ENCODE measurements at regions of chr2 and their contacts with region 1.

Region 1: GRCh38 chr2:3771576-3771975 is 68.2 kb downstream of the DCDC2C start:
- DNase-seq: no peak
- H3K4me3 ChIP-seq: no peak overlapping the region
- H3K27ac ChIP-seq: no peak overlapping the region
- H3K4me1 ChIP-seq: no peaks in the 10 kb centered on the region
- H3K27me3 ChIP-seq: no peaks in the 10 kb centered on the region
- CTCF ChIP-seq: no peak

Region 2: DNA sequence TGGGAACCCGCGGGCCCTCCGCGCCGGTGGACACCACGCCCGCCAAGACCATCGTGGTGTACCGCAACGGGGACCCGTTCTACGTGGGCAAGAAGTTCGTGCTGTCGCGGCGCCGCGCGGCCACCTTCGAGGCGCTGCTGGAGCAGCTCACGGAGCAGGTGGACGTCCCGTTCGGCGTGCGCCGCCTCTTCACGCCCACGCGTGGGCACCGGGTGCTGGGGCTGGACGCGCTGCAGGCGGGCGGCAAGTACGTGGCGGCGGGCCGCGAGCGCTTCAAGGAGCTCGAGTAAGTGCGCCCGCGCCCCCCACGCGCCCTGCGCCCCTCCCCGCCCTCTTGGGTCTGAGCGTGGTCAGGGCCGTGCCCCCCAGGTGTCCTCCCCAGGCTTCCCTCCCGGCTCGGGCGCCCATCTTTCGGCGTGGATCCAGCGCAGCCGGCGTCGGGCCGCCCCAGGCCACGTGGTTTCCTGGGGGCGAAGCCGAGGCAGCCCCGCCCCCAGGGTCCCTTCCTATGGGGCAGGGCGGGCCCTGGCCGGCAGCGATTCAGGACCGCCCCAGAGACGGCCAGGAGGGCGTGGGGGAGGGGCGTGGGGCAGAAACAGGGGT is 67.7 kb before region 1 on chr2:
- CTCF ChIA-PET with region 1: no interaction called
- dilution Hi-C with region 1: loop called (anchors 5 kb)
- in situ Hi-C with region 1: no loop called
- intact Hi-C with region 1: no loop called
- DNase-seq: no peak
- H3K4me3 ChIP-seq: no peak overlapping the region
- H3K27ac ChIP-seq: no peak overlapping the region
- H3K4me1 ChIP-seq: no peaks in the 10 kb centered on the region
- H3K27me3 ChIP-seq: peaks cover 2% of the 10 kb centered on the region
- CTCF ChIP-seq: no peak

Region 3: DNA sequence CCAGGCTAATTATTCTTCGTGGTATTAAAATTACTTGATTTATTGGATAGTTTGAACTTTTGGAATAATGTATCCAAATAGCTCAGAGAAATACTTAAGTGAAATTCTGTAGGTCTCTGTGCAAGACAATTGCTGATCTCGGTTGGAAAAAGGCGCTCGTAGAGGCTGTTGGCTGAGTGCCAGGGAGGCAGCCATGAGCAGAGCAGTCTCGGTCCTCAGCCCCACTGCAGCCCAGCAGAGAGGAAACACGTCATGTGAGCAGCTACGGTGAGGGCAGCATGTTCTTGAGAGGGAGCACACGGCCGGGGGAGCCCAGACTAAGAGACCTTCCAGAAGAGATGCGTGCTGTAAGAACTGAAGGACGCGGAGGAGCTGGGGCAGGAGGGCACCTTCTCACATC is 25.7 kb before region 1 on chr2:
- CTCF ChIA-PET with region 1: no interaction called
- dilution Hi-C with region 1: no loop called
- in situ Hi-C with region 1: no loop called
- intact Hi-C with region 1: no loop called
- DNase-seq: no peak
- H3K4me3 ChIP-seq: no peak overlapping the region
- H3K27ac ChIP-seq: no peak overlapping the region
- H3K4me1 ChIP-seq: no peaks in the 10 kb centered on the region
- H3K27me3 ChIP-seq: no peaks in the 10 kb centered on the region
- CTCF ChIP-seq: no peak

Region 4: GRCh38 chr2:4047961-4048891 is 276.6 kb after region 1 on chr2:
- CTCF ChIA-PET with region 1: no interaction called
- dilution Hi-C with region 1: no loop called
- in situ Hi-C with region 1: no loop called
- intact Hi-C with region 1: no loop called
- DNase-seq: no peak
- H3K4me3 ChIP-seq: no peak overlapping the region
- H3K27ac ChIP-seq: no peak overlapping the region
- H3K4me1 ChIP-seq: no peaks in the 10 kb centered on the region
- H3K27me3 ChIP-seq: no peaks in the 10 kb centered on the region
- CTCF ChIP-seq: no peak

Measured in mammary epithelial cell (primary cell).